ENCODE measurements at regions of chr3 and their contacts with region 1.

Region 1: DNA sequence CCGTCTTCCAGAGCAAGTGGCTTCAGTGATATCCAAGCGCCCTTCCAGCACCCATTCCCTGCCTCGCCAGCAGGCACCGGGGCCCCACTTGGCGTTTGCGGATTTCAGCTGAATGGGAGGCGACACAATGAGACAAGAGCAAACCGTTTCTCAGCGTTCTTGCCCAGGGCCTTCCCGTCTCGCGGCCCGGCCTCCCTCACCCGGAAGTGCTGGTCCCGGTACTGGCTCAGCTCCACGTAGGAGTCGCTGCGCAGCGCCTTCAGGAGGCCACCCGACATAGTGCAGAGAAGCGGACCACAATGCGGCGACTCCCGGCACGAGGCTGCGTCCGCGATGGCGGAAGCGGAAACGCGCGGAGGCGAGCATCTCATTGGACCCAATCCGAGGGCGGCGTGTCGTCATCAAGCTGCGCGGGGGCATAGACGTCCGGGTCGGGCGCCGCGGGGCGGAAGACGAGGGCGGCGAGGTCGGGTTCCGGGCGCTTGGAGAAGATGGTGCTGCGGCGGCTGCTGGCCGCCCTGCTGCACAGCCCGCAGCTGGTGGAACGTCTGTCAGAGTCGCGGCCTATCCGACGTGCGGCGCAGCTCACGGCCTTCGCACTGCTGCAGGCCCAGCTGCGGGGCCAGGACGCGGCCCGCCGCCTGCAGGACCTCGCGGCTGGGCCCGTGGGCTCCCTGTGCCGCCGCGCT is at the start of gene NCBP2:
- DNase-seq: peak; percentile 99
- H3K4me3 Mint-ChIP-seq: peak within 1 kb of the TSS; percentile 99
- H3K27ac Mint-ChIP-seq: peak within 1 kb of the TSS; percentile 93
- H3K4me1 Mint-ChIP-seq: peaks cover 41% of the 10 kb centered on the region
- H3K27me3 Mint-ChIP-seq: no peaks in the 10 kb centered on the region
- total RNA-seq, gene NCBP2: 82.2 and 83.9 TPM in 2 replicates

Region 2: GRCh38 chr3:196609343-196609775 is 333.0 kb before region 1 on chr3:
- intact Hi-C with region 1: loop called (anchors 2 kb)
- DNase-seq: peak; percentile 86
- H3K4me3 Mint-ChIP-seq: peak overlapping the region; percentile 62
- H3K27ac Mint-ChIP-seq: peak overlapping the region; percentile 92
- H3K4me1 Mint-ChIP-seq: peaks cover 34% of the 10 kb centered on the region
- H3K27me3 Mint-ChIP-seq: no peaks in the 10 kb centered on the region

Region 3: DNA sequence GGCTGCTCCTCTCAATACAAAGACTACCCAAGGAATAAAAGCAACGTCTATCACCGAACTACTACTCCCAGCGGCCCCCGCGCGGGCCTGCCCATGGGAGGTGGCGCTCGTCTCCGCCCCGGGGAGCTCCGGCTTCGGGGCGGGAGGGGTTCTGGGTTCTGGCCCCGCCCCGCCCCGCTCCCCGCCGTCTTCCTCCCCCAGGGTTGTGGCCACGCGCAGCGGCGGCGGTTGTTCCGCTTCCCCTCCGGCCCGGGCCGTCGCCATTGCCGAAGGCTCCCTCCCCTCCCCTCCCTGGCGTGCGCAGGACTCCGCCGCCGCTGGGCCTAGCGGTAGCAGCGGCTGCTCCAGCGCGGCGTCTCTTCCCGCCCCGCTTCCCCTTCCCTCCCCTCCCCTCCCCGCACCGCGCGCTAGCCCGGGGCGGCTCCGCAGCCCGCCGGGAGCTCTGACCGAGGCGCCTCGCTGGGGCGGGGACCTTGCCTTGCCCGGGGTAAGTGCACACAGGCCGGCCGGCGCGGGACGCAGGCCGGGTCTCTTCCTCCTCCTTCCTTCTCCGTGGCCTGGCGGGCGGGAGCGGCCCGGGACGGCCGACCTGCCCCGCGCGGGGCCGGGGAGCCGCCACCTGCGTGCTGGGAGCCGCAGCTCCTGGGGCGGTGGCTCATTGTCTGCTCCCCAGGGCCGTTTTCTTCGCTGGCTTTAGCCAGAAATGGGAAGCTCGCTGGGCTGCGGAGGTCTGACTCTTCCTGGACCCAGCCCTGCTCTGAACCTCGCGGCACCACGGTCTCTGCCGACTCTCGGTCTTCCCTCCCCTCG is 202.5 kb before region 1 on chr3 and contains the start of gene PAK2:
- intact Hi-C with region 1: loop called (anchors 1 kb)
- DNase-seq: peak; percentile 88
- H3K4me3 Mint-ChIP-seq: peak within 1 kb of the TSS; percentile 100
- H3K27ac Mint-ChIP-seq: peak within 1 kb of the TSS; percentile 100
- H3K4me1 Mint-ChIP-seq: peaks cover 31% of the 10 kb centered on the region
- H3K27me3 Mint-ChIP-seq: no peaks in the 10 kb centered on the region
- total RNA-seq, gene PAK2: 103 and 107 TPM in 2 replicates

Region 4: GRCh38 chr3:196867507-196868296 is 74.7 kb before region 1 on chr3 and contains the start of gene SENP5:
- intact Hi-C with region 1: loop called (anchors 1 kb)
- DNase-seq: peak; percentile 85
- H3K4me3 Mint-ChIP-seq: peak within 1 kb of the TSS; percentile 98
- H3K27ac Mint-ChIP-seq: peak within 1 kb of the TSS; percentile 97
- H3K4me1 Mint-ChIP-seq: peaks cover 13% of the 10 kb centered on the region
- H3K27me3 Mint-ChIP-seq: peaks cover 2% of the 10 kb centered on the region
- total RNA-seq, gene SENP5: 43.9 and 46.9 TPM in 2 replicates

Region 5: DNA sequence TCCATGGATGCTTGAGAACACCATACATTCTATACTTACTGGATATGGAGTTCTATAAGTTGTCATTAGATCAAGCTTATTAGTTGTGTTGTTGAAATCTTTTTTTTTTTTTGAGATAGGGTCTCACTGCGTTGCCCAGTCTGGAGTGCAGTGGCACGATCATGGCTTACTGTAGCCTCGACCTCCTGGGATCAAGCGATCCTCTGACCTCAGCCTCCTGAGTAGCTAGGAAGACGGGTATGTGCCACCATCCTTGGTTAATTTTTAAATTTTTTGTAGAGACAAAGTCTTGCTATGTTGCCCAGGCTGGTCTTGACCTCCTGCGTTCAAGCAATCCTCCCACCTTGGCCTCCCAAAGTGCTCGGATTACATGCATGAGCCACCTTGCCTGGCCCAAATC is 12.5 kb after region 1 on chr3:
- intact Hi-C with region 1: no loop called
- DNase-seq: no peak
- H3K4me3 Mint-ChIP-seq: no peak overlapping the region
- H3K27ac Mint-ChIP-seq: no peak overlapping the region
- H3K4me1 Mint-ChIP-seq: peaks cover 2% of the 10 kb centered on the region
- H3K27me3 Mint-ChIP-seq: peaks cover 10% of the 10 kb centered on the region

Region 6: GRCh38 chr3:196969660-196970546 is 27.5 kb after region 1 on chr3:
- intact Hi-C with region 1: loop called (anchors 2 kb)
- DNase-seq: peak; percentile 63
- H3K4me3 Mint-ChIP-seq: peak overlapping the region; percentile 80
- H3K27ac Mint-ChIP-seq: peak overlapping the region; percentile 74
- H3K4me1 Mint-ChIP-seq: peaks cover 11% of the 10 kb centered on the region
- H3K27me3 Mint-ChIP-seq: peaks cover 6% of the 10 kb centered on the region

Region 7: DNA sequence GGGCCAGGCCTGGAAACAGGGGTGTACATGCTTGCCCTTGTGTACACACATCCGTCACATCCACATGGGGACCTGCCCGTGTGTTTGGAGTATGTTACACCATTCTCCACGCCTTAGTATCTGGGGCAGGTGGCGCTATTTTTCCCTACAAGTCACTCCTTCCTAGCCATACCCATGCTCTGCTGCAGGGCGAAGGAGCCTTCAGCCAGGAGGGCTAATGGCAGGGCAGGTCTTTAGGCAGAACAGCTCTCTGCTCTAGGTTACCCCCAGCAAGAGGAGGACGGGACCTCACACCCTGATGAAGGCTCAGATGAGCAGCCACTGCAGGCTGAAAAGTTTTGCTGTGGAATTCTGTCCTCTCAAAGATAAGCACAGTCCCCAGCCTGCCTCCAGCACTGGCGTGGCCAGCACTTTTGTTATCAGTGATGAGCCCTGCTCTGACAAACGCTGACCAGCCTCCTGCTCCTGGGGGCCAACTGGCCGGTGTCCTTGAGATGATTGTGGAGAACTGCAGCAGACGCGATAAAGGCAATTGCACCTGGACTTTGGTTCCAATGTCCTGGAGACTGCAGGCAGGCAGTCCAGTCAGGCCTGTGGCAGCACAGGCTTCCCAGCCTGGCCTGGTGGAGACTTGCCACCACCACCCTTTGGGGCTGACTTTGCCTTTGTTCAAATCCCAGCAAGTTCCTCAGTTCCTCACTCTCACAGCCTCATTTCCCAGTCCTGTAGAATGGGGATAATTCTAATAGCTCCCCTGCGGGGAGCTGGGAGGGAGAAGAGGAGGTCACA is 46.1 kb after region 1 on chr3:
- intact Hi-C with region 1: no loop called
- DNase-seq: no peak
- H3K4me3 Mint-ChIP-seq: no peak overlapping the region
- H3K27ac Mint-ChIP-seq: no peak overlapping the region
- H3K4me1 Mint-ChIP-seq: no peaks in the 10 kb centered on the region
- H3K27me3 Mint-ChIP-seq: peaks cover 4% of the 10 kb centered on the region